Left ventricle myocardium inferior (tissue), 1 donor: ENCODE measurements at regions of chr16 and their contacts with region 1.

Region 1: DNA sequence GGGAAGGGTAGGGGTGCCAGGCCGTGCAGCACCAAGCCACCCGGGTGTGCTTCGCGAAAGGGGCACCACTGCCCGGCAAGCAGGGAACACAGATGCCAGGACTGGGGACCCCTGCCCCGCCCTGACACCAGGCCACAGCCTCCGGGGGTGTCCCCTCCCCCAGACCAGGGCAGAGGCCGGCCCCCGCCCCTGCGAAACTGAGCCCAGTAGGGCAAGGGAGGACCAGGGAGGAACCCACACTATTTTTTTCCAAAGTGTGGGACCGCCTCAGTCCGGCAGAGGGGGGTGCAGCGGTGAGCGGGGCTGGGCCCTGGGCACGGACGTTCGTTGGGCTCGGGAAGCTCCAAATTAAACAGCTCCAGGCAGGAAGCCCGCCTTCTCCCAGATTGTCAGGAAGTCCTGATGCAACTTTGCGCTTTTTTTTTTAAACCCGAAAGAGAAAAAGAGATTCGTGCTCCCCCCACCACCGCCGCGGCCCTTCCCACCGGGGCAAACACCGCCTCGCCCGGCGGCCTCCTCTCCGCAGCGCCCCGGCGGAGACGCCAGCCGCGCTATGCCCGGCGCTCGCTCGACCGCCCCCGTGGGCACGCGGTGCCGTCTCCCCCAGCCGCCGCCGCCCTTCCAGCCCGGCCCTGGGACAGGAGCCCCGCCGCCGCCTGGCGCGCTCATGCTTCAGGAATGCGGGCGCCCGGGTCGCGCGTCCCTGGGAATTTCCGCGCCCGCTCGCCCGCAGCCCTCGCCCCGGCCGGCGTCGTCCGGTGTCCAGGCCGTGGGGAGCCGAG is 755 bp downstream of the PIEZO1 start:
- DNase-seq: peak; percentile 73
- H3K4me3 ChIP-seq: peak overlapping the region; percentile 81
- H3K27ac ChIP-seq: peak overlapping the region; percentile 94
- H3K4me1 ChIP-seq: peaks cover 62% of the 10 kb centered on the region
- H3K27me3 ChIP-seq: peaks cover 33% of the 10 kb centered on the region
- CTCF ChIP-seq: peak; percentile 64

Region 2: DNA sequence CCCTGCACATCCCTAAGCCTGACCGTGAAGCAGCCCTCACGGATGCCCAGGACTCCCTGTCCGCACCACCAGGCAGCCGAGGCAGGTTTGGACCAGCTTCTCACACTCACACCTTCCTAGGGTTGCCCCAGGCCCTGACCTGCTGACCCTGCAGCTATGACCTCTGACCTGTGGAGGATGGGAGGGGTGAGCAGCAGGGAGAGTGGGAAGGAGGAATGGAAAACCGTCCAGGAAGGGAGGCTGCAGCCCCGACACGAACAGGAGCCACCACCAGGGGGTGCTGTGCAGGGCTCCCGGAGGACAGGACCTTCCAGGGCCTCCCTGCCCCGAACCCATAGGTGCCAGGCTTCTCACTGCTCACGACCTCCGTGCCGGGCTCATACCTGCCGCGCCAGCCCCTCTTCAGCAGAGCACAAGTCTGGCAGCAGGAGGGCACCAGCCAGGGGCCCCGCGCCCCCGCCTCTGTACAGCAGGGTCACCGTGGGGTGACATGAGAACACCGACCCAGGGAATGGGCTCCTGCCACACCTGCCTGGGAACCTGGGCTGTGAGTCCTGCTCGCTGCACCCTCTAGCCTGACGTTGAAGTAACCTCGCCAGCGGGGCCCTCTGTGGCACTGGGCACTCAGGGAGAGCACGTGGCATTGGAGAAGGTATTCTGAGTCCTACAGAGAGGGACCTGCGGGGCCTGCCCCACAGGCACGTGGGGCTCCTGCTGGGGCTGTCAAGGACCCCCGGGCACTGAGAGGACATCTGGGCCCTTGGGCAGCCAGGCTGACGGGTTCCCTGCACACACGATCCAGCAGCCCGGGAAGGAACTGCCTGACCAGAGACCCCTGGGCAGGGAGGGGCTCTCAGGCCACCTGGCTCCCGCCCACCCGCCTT is 40.3 kb before region 1 on chr16:
- intact Hi-C with region 1: loop called (anchors 5 kb)
- DNase-seq: peak; percentile 80
- H3K4me3 ChIP-seq: peak overlapping the region; percentile 15
- H3K27ac ChIP-seq: peak overlapping the region; percentile 73
- H3K4me1 ChIP-seq: peaks cover 41% of the 10 kb centered on the region
- H3K27me3 ChIP-seq: no peaks in the 10 kb centered on the region
- CTCF ChIP-seq: peak; percentile 91

Region 3: DNA sequence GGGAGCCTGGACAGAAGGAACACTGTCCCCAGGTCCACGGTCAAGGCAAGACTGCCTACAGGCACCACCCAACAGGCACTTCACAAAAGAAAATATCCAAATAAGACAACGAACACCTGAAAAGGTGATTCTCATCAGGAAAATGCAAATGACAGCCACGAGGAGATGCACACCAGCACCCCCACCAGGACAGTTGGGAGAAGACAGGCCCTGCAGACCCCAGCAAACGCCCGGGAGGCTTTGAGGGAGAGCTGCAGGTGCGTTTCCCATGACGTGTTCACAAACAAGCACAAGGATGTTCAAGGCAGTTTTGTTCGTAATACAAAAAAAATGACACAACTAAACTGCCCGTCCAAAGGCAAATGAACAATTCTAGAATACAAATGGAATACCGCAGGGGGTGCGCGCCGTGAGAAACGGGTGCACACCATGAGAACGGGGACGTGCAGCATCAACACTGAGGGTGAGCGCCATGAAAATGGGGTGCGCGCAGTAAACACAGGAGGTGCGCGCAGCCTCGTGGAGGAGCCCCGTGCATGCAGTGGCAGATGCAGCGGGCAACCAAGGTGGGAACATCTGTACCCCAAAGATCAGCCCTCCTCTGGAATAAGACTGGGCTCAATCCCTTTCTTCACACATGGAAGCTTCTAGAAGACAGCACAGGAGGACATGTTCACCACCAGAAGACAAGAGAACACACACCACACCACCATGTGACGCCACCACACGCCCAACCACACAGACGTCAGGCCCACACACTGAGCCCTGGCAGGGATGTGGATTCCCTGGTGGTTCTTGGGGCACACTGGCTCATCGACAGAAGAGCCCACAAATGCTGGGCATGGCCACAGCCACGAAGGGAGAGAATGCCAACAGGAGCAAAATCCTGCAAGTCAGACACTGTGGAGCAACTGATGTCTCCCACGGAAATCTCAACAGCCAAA is 524.4 kb after region 1 on chr16:
- intact Hi-C with region 1: no loop called
- DNase-seq: peak; percentile 10
- H3K4me3 ChIP-seq: no peak overlapping the region
- H3K27ac ChIP-seq: no peak overlapping the region
- H3K4me1 ChIP-seq: peaks cover 43% of the 10 kb centered on the region
- H3K27me3 ChIP-seq: no peaks in the 10 kb centered on the region
- CTCF ChIP-seq: peak; percentile 50